AG04449 (cell line): ENCODE measurements at regions of chr11 and their contacts with region 1.

Region 1: GRCh38 chr11:23540101-23540561 is 679.9 kb upstream of the CCDC179 start:
- DNase-seq: peak; percentile 50
- H3K4me3 ChIP-seq: no peak overlapping the region
- CTCF ChIP-seq: peak; percentile 68

Region 2: GRCh38 chr11:23520226-23520960 is 19.7 kb before region 1 on chr11:
- CTCF ChIA-PET with region 1: interaction called, 52 read pairs
- POLR2A ChIA-PET with region 1: no interaction called
- DNase-seq: no peak
- H3K4me3 ChIP-seq: no peak overlapping the region
- CTCF ChIP-seq: no peak

Region 3: DNA sequence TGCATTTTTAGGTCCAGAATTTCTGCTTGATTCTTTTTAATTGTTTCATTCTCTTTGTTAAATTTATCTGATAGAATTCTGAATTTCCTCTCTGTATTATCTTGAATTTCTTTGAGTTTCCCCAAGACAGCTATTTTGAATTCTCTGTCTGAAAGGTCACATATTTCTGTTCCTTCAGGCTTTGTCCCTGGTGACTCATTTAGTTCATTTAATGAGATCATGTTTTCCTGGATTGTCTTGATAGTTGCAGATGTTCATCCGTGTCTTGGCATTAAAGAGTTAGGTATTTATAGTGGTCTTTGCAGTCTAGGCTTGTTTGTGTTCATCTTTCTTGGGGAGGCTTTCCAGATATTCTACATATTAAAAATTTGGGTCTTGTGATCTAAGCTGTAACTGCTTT is 15.0 kb after region 1 on chr11:
- CTCF ChIA-PET with region 1: interaction called, 25 read pairs
- POLR2A ChIA-PET with region 1: no interaction called
- DNase-seq: no peak
- H3K4me3 ChIP-seq: no peak overlapping the region
- CTCF ChIP-seq: no peak

Region 4: DNA sequence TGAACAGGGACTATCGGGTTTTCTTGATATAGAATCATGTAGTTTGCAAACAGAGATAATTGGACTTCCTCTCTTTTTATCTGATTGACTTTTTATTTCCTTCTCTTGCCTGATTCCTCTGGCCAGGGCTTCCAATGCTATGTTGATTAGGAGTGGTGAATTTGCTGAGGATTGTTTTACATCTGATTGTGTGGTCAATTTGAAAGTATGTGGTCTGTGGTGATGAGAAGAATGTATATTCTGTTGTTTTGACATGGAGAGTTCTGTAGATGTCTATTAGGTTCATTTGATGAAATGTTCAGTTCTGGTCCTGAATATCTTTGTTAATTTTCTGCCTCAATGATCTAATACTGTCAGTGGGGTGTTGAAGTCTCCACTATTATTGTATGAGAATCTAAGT is 33.3 kb after region 1 on chr11:
- CTCF ChIA-PET with region 1: interaction called, 10 read pairs
- POLR2A ChIA-PET with region 1: no interaction called
- DNase-seq: peak; percentile 19
- H3K4me3 ChIP-seq: no peak overlapping the region
- CTCF ChIP-seq: no peak

Region 5: DNA sequence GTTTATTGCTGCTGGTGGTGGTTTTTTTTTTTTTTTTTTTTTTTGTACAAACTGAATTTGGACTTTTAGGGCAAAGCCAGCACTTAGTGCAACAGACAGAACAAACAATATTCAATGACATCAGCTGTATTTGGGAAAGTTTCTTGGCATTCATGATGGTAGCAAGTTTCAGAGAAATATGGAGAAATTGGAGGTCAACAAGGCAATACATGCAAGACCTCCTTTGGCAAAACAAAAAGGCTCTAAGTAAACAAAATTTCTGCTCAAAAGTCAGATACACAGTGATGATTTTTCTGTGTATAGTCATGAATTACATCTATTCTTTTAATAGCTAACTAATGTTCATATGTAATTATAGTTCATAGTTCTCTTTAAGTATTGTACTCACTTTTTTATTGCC is 344.2 kb after region 1 on chr11:
- CTCF ChIA-PET with region 1: no interaction called
- POLR2A ChIA-PET with region 1: no interaction called
- DNase-seq: no peak
- H3K4me3 ChIP-seq: no peak overlapping the region
- CTCF ChIP-seq: no peak

Region 6: DNA sequence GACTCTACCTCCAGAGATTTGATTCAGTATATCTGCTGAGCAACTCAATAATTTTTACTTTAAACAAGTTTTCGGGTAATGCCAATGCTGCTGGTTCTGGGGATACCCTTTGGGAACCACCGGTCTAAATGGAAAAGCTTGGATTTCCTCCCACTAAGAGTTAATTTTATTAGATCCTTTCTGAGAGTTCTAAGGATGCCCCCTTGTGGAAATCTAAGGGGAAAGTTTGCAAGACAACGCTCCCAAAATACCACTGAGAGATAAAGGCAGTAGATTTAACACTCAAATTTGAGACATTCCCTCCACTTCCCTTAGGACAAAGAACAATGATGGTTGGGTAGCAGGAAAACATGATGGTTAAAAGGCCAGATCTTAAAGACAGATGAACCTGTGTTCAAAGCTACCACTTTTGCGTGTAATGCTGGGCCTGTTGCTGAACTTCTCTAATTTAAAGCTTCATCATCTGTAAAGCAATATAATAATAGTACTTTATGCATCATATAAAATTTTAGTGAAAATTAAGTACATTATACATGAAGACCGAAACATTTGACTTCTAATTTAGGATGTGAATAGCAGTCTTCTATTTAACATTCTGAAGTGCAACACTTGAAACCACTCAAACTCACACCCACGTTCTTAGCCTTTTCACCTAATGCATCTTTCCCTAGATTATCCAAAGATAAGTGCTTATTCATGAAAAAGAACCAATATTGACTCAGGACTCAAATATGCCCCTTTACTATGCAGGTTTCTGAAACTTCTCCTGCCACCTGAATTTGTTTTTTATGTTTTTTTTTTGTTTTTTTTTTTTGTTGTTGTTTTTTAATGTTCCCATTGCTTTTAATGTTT is 846.6 kb after region 1 on chr11:
- CTCF ChIA-PET with region 1: interaction called, 18 read pairs
- POLR2A ChIA-PET with region 1: no interaction called
- DNase-seq: peak; percentile 1
- H3K4me3 ChIP-seq: no peak overlapping the region
- CTCF ChIP-seq: peak; percentile 36